Right ventricle myocardium inferior (tissue), 1 donor: ENCODE measurements at regions of chr2 and their contacts with region 1.

Region 1: DNA sequence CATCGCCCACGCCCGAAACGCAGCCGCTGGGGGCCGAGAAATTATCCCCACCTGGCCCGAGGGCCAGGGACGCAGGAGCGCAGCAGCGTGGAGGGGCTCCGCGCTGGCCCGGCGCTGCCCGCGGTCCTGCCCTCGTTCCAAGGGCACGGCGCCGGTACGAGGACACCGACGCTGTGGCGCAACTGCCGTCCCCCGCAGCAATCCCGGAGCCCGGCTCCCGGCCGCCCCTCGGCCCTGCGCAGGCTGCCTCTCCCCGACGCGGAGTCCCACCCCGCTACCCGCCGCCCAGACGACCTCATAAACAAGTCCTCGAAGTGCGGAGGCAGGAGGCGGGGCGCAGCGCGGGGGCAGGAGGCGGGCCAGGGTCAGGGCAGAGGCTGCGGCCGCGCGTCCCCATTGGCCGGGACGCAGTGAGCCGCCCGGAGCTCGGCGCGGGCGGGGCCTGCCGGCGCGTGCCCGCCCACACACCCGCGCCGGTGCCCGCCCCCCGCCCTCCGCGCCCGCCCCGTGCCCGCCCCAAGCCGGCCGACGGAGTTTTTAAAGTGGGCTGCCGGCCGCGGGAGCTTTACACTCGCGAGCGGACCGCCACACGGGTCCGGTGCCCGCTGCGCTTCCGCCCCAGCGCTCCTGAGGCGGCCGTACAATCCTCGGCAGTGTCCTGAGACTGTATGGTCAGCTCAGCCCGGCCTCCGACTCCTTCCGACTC is at the start of gene EPAS1:
- DNase-seq: peak; percentile 98
- ATAC-seq: peak; percentile 90
- total RNA-seq, gene EPAS1: 205 TPM

Region 2: GRCh38 chr2:46002507-46002883 is 294.5 kb before region 1 on chr2:
- intact Hi-C with region 1: loop called (anchors 5 kb)
- DNase-seq: no peak
- ATAC-seq: peak; percentile 65

Region 3: GRCh38 chr2:46062637-46063412 is 234.2 kb before region 1 on chr2:
- intact Hi-C with region 1: loop called (anchors 2 kb)
- DNase-seq: peak; percentile 78
- ATAC-seq: peak; percentile 77

Region 4: DNA sequence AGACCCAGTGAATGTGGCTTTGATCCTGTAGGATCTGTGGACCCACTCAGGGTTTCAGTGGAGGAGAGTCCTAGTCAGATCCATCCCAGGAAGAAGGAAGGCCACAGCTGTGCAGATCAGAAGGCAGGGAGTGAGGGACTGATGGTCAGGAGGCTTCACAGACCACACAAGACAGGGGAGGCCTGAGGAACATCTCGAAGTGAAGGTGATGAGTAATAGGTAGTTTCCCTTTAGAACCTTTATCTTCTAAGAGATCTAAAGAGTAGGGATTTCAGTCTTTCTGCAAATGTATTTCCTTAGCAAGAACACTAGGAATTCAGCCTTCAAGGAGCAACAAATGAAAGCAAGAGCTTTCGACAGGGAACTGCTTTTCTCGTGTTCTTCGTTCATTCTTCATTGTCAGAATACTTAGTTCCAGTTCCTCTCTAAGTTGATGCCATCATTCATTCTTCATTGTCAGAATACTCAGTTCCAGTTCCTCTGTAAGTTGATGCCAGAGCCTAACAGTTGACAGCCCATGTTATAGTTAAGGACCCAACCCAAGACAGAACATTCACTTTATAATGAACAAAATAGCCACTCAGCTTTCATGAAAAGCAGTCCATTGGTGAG is 150.0 kb before region 1 on chr2:
- intact Hi-C with region 1: no loop called
- DNase-seq: no peak
- ATAC-seq: no peak

Region 5: DNA sequence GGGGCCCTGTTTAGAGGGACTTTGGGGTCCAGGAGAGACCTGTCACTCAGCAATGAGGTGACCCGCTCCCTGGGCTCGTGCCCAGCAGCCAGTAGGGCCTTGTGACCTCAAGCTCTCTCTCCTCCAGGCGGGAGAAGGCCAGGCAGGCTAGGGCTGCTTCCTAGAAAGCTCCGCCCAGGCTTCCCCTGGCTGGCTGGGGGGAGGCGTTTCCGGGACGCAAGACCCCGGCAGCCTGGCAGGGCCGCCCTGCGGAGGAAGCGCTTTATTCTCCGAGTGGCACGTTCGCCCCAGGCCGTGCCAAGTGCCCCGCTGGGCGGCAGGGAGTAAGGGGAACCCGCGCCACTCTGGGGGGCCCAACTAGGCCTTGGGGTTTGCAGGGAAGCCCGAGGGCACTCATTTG is 21.0 kb before region 1 on chr2:
- intact Hi-C with region 1: loop called (anchors 2 kb)
- DNase-seq: peak; percentile 80
- ATAC-seq: peak; percentile 71

Region 6: GRCh38 chr2:46351750-46352138 is 54.8 kb after region 1 on chr2:
- intact Hi-C with region 1: loop called (anchors 2 kb)
- DNase-seq: peak; percentile 78
- ATAC-seq: peak; percentile 28